ENCODE measurements at regions of chr15 and their contacts with region 1.

Region 1: DNA sequence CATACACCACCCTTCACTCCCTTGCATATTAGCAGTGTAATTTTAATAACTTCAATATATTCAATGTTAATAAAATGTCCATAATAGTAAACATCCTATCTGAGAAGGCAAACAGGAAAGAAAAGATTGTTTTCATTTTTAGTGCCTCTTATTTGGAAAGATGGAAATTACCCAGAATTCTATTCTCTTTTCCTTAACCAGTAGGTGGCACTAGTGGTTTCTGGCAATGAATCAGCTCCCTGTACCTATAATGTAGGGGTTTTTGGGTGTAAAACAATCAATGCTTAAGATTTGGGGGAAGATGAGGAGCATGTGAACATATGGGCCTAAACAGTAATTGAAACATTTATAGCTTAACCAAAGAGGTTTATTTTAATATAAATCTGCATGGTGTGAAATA is 5.7 kb upstream of the SEMA6D start:
- DNase-seq: no peak
- ATAC-seq: no peak
- H3K4me3 ChIP-seq: no peak overlapping the region
- H3K27ac ChIP-seq: no peak overlapping the region
- H3K4me1 ChIP-seq: peaks cover 3 to 4% of the 10 kb centered on the region in 2 donors
- H3K27me3 ChIP-seq: no peaks in the 10 kb centered on the region
- CTCF ChIP-seq: peak; percentile 31 to 66 (median 40)
- POLR2A ChIP-seq: no peak

Region 2: GRCh38 chr15:47644722-47645121 is 66.9 kb before region 1 on chr15:
- in situ Hi-C with region 1: loop called in 1 of 4 experiments (anchors 10 kb)
- intact Hi-C with region 1: no loop called
- DNase-seq: no peak
- ATAC-seq: no peak
- H3K4me3 ChIP-seq: no peak overlapping the region
- H3K27ac ChIP-seq: no peak overlapping the region
- H3K4me1 ChIP-seq: no peaks in the 10 kb centered on the region
- H3K27me3 ChIP-seq: no peaks in the 10 kb centered on the region
- CTCF ChIP-seq: no peak
- POLR2A ChIP-seq: no peak

Region 3: GRCh38 chr15:47929138-47929803 is 217.6 kb after region 1 on chr15:
- in situ Hi-C with region 1: no loop called
- intact Hi-C with region 1: no loop called
- DNase-seq: no peak
- ATAC-seq: no peak
- H3K4me3 ChIP-seq: no peak overlapping the region
- H3K27ac ChIP-seq: no peak overlapping the region
- H3K4me1 ChIP-seq: no peaks in the 10 kb centered on the region
- H3K27me3 ChIP-seq: no peaks in the 10 kb centered on the region
- CTCF ChIP-seq: no peak
- POLR2A ChIP-seq: no peak

Measured in gastrocnemius medialis (tissue), 4 donors.